ENCODE measurements at regions of chr14 and their contacts with region 1.

Region 1: GRCh38 chr14:102139248-102140026 is at the start of gene WDR20:
- DNase-seq: peak; percentile 98
- H3K4me3 Mint-ChIP-seq: peak within 1 kb of the TSS; percentile 94
- H3K27ac Mint-ChIP-seq: peak within 1 kb of the TSS; percentile 94
- H3K4me1 Mint-ChIP-seq: peaks cover 17% of the 10 kb centered on the region
- H3K27me3 Mint-ChIP-seq: no peaks in the 10 kb centered on the region
- total RNA-seq, gene WDR20: 35.3 and 37.0 TPM in 2 replicates

Region 2: DNA sequence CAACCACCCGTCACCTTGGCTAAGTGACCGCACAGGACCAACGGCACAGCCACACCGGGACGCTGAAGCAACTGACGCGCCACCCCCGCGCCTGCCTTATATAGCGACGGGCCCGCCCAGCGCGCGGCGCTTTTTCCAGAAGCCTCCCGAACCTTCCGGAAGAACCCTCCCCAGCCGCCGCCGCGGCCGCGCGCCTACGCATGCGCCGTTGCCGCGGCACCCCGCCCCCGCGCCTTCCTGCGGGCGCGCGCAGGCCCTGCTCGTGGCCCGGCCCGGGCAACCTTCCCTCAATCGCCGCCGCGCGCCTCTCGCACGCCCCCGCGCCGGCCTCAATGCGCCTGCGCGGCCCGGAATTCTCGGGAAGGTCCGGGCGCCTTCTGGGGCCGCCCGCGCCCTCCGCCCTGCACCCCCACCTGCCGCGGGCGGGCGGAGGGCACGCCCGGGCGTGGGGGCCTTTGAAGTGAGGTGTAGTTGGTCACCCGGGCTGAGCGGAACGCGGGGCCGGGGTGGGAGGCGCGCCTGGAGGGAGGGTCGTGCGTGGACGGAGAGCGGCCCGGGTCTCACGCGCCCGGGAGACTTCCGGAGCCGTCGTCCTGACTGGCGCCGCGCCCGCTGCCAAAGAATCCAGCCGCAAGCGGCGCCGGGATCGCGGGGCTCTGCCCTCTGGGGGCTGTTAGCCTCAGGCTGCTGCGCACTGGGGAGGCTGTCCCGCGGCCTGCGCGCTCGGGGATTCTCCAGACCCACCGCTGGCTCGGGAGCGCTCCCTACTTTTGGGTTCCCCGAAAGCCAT is 52.3 kb before region 1 on chr14 and contains the start of gene HSP90AA1:
- intact Hi-C with region 1: loop called (anchors 2 kb)
- DNase-seq: peak; percentile 94
- H3K4me3 Mint-ChIP-seq: peak within 1 kb of the TSS; percentile 90
- H3K27ac Mint-ChIP-seq: peak within 1 kb of the TSS; percentile 93
- H3K4me1 Mint-ChIP-seq: peaks cover 49% of the 10 kb centered on the region
- H3K27me3 Mint-ChIP-seq: no peaks in the 10 kb centered on the region
- total RNA-seq, gene HSP90AA1: 995 and 1,017 TPM in 2 replicates

Region 3: DNA sequence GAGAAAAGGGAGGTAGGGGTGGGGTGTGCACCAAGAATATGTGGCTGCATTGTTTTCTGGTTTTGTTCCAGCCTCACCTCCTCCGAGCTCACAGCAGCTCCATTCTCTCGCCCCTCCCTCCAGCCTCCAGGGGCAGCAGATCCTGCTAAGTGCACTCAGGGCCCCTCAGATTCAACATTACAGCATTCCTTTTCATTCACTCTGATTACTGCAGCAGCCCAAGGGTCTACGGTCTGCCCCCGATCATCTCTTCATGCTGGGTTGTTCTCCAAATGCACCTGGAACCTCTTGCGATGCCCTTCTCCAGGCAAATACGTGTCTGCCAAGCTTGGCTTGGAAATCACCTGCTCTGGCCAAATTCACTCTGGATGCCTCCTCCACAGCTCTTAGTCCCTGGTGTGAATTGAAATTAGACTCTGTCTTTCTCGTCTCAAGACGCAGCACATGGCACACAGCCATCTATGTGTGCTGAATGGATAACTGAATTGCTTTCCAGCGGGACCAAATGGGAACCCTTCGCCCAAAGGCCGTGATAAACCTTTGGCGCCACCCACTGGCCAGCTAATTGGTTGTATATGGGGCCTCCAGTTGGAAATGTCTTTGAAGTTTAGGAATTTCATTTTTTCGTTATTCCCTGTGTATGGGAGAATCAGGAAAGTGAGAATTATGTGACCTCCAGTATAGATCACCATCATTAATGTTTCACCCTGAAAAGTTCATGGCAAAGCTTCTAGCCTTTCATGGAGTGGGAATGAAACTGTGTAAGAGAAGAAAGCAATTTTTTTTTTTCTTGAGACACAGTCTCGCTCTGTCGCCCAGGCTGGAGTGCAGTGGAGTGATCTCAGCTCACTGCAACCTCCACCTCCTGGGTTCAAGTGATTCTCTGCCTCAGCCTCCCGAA is 43.0 kb before region 1 on chr14:
- intact Hi-C with region 1: loop called (anchors 2 kb)
- DNase-seq: peak; percentile 35
- H3K4me3 Mint-ChIP-seq: no peak overlapping the region
- H3K27ac Mint-ChIP-seq: no peak overlapping the region
- H3K4me1 Mint-ChIP-seq: peaks cover 13% of the 10 kb centered on the region
- H3K27me3 Mint-ChIP-seq: no peaks in the 10 kb centered on the region

Region 4: GRCh38 chr14:102164241-102164641 is 24.8 kb after region 1 on chr14:
- intact Hi-C with region 1: no loop called
- DNase-seq: no peak
- H3K4me3 Mint-ChIP-seq: no peak overlapping the region
- H3K27ac Mint-ChIP-seq: no peak overlapping the region
- H3K4me1 Mint-ChIP-seq: peaks cover 20% of the 10 kb centered on the region
- H3K27me3 Mint-ChIP-seq: no peaks in the 10 kb centered on the region

Region 5: DNA sequence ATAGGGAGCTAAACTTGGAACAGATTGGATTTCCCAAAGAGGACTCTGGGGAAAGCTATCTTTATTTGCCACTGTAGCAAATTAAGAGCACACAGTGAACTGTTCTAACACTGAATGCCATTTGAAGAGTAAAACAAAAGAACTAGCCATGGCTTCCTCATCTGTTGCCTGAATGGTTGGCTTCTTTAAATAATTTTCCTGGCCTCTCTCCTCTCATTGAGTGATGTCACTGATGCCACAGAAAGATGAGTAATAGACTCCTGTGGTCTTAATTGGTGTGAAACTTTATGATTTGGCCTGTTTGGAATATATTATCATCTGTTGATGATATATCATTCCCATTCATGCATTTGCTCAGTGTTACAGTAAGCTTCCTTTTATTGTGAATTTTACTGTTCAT is 42.8 kb after region 1 on chr14:
- intact Hi-C with region 1: loop called (anchors 5 kb)
- DNase-seq: no peak
- H3K4me3 Mint-ChIP-seq: no peak overlapping the region
- H3K27ac Mint-ChIP-seq: no peak overlapping the region
- H3K4me1 Mint-ChIP-seq: peaks cover 50% of the 10 kb centered on the region
- H3K27me3 Mint-ChIP-seq: no peaks in the 10 kb centered on the region

Region 6: DNA sequence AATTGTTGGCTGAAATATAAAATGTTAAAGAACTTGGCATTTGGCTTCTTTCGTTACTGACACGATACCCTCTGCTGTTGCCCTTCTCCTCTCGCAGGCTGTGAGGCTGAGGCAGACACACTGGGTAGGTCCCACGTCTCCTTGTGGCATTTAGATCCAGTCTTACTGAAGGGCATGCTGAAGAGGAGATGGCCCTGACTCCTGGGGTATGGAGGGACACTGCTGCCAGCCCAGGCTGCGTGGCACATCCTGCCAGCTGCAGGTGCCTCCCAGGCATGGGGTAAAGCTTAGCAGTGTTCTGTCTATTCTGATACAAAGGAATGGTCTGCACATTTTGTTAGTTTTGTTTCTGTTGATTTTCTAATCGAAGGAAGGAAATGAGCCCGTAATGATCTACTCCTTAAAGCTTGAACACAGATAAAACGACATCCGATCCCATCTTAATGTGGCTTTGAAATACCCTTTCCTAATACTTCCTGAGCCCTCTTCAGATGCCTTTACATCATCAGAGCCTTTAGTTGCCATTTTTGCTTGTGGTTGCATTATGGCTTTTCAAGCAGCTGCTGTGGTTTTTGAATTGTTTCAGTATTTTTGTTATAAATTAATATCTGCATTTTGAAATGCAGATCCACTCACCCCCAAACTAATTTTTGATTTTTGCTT is 61.4 kb after region 1 on chr14:
- intact Hi-C with region 1: loop called (anchors 2 kb)
- DNase-seq: no peak
- H3K4me3 Mint-ChIP-seq: no peak overlapping the region
- H3K27ac Mint-ChIP-seq: peak overlapping the region; percentile 56
- H3K4me1 Mint-ChIP-seq: peaks cover 33% of the 10 kb centered on the region
- H3K27me3 Mint-ChIP-seq: no peaks in the 10 kb centered on the region

Region 7: DNA sequence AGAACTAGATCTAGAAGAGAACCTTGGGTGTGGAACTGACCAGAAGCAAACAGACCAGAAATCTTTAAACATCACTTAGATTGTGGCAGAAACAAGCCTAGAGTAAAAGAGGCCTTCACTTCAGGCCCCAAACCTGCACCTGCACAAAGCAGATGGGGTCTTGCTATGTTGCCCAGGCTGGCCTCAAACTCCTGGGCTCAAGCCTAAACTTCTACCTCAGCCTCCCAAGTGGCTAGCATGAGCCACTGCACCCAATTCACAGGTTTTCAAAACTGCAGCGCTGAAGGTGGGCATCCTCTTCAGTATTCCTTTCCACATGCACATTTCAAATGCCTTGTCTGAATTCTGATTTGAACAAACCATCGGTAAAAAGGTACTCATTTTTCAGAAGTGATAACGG is 145.7 kb after region 1 on chr14:
- intact Hi-C with region 1: no loop called
- DNase-seq: no peak
- H3K4me3 Mint-ChIP-seq: no peak overlapping the region
- H3K27ac Mint-ChIP-seq: no peak overlapping the region
- H3K4me1 Mint-ChIP-seq: no peaks in the 10 kb centered on the region
- H3K27me3 Mint-ChIP-seq: peaks cover 2% of the 10 kb centered on the region

Region 8: GRCh38 chr14:102304611-102305509 is 165.4 kb after region 1 on chr14 and contains the start of gene MOK:
- intact Hi-C with region 1: loop called (anchors 1 kb)
- DNase-seq: peak; percentile 98
- H3K4me3 Mint-ChIP-seq: peak within 1 kb of the TSS; percentile 92
- H3K27ac Mint-ChIP-seq: peak within 1 kb of the TSS; percentile 92
- H3K4me1 Mint-ChIP-seq: peaks cover 11% of the 10 kb centered on the region
- H3K27me3 Mint-ChIP-seq: peaks cover 16% of the 10 kb centered on the region
- total RNA-seq, gene MOK: 4.8 and 6.8 TPM in 2 replicates

Region 9: GRCh38 chr14:102479777-102480176 is 340.3 kb after region 1 on chr14:
- intact Hi-C with region 1: no loop called
- DNase-seq: no peak
- H3K4me3 Mint-ChIP-seq: no peak overlapping the region
- H3K27ac Mint-ChIP-seq: no peak overlapping the region
- H3K4me1 Mint-ChIP-seq: peaks cover 4% of the 10 kb centered on the region
- H3K27me3 Mint-ChIP-seq: no peaks in the 10 kb centered on the region

Region 10: DNA sequence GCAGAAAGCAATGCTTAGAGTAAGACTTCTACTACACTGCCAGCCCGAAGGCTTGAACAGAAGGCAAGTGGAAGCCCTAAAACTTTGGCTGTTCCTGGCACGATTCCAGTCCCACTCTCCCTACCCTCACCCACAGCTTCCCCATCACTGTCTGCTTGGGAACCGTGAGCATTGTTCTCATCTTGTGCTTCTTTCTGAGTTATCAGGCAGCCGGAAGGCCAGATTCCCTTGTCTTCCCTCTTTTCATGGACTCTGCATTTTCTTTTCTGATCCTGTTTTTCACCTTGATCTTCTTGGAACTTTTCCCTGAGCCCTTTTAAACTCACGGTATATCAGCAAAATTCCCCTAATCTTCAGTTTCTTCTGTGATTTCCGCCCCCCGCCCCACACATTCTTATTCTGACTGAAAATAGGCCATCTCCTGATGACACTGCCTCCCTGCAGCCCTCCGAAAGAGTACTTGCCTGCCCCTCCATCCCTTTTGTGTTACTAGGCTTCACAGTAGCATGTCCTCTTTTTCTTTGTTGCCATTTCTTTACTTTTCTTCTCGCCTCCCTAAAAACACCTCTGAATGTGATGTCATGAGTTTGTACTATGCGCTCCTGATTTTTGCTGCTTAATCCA is 482.9 kb after region 1 on chr14:
- intact Hi-C with region 1: no loop called
- DNase-seq: no peak
- H3K4me3 Mint-ChIP-seq: no peak overlapping the region
- H3K27ac Mint-ChIP-seq: no peak overlapping the region
- H3K4me1 Mint-ChIP-seq: peaks cover 22% of the 10 kb centered on the region
- H3K27me3 Mint-ChIP-seq: no peaks in the 10 kb centered on the region

Measured in activated T-helper 2 cell treated with anti-CD3 and anti-CD28 coated beads, Interferon-gamma antibody, Interleukin-2, Interleukin-4, amounts not matched to agents 10 μg/mL and 5 μg/mL and 100 μg/mL, durations not matched to agents 14 hours and 24 hours and 36 hours (primary cell).